ENCODE measurements at regions of chr17 and their contacts with region 1.

Region 1: GRCh38 chr17:57739402-57740392 is 5.4 kb downstream of the CCDC182 start:
- DNase-seq: peak; percentile 49
- ATAC-seq: no peak
- H3K4me3 ChIP-seq: no peak overlapping the region
- H3K4me3 Mint-ChIP-seq: no peak overlapping the region
- H3K27ac ChIP-seq: no peak overlapping the region
- H3K27ac Mint-ChIP-seq: no peak overlapping the region
- H3K4me1 ChIP-seq: peaks cover 19 to 24% of the 10 kb centered on the region in 2 donors
- H3K4me1 Mint-ChIP-seq: peaks cover 20% of the 10 kb centered on the region
- H3K27me3 ChIP-seq: no peaks in the 10 kb centered on the region
- H3K27me3 Mint-ChIP-seq: peaks cover 3% of the 10 kb centered on the region
- CTCF ChIP-seq: peak; percentile 27

Region 2: GRCh38 chr17:57338257-57338914 is 401.3 kb before region 1 on chr17:
- CTCF ChIA-PET with region 1: no interaction called
- POLR2A ChIA-PET with region 1: no interaction called
- intact Hi-C with region 1: loop called (anchors 10 kb)
- DNase-seq: peak; percentile 66
- ATAC-seq: peak; percentile 91
- H3K4me3 ChIP-seq: peak overlapping the region in 1 of 5 experiments; percentile 5
- H3K4me3 Mint-ChIP-seq: peak overlapping the region; percentile 67
- H3K27ac ChIP-seq: no peak overlapping the region
- H3K27ac Mint-ChIP-seq: peak overlapping the region; percentile 4
- H3K4me1 ChIP-seq: peaks cover 15 to 19% of the 10 kb centered on the region in 2 donors
- H3K4me1 Mint-ChIP-seq: peaks cover 30% of the 10 kb centered on the region
- H3K27me3 ChIP-seq: no peaks in the 10 kb centered on the region
- H3K27me3 Mint-ChIP-seq: no peaks in the 10 kb centered on the region
- CTCF ChIP-seq: no peak

Measured in B cell (primary cell).